Lower lobe of right lung (tissue), 2 donors: ENCODE measurements at regions of chr2 and their contacts with region 1.

Region 1: GRCh38 chr2:209208211-209208610 is 215.6 kb upstream of the MAP2 start:
- DNase-seq: peak; percentile 43
- ATAC-seq: peak in 1 of 2 donors; percentile 44
- H3K4me3 ChIP-seq: no peak overlapping the region
- H3K27ac ChIP-seq: no peak overlapping the region
- H3K4me1 ChIP-seq: no peaks in the 10 kb centered on the region
- H3K27me3 ChIP-seq: no peaks in the 10 kb centered on the region
- CTCF ChIP-seq: peak; percentile 56

Region 2: DNA sequence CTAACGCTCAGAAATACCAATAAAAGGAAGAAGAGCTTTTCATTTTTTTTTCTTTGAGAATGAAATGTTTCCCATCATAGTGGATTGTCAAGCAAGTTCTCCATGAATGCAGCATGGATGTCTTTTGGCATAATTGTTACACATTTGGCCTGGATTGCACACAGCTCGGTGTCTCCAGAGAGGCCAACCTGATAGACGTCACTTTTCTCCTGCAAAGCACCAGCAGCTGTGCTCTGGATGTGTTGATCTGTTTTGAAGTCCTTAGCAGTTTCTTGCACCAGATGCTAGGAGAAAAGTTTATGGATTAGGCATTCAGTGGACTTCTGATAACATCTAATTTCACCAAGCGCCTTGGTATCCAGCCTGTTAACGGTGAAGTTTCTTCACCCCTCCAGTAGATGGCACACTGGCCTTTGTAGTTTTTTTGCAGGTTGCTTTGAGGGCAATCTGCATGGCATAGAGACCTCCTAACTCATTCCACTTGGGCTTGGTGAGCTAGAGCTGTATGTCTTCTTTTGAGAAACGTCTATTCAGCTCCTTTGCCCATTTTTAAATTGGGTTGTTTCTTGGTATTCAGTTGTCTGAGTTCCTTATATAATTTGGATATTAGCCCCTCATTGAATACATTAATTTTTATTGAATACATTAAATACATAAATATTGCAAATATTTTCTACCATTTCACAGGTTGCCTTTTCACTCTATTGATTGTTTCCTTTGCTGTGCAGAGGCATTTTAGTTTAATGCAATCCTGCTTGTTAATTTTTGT is 741.9 kb before region 1 on chr2:
- intact Hi-C with region 1: loop called (anchors 5 kb)
- DNase-seq: no peak
- ATAC-seq: peak; percentile 52 to 61
- H3K4me3 ChIP-seq: no peak overlapping the region
- H3K27ac ChIP-seq: no peak overlapping the region
- H3K4me1 ChIP-seq: no peaks in the 10 kb centered on the region
- H3K27me3 ChIP-seq: no peaks in the 10 kb centered on the region
- CTCF ChIP-seq: peak; percentile 57

Region 3: DNA sequence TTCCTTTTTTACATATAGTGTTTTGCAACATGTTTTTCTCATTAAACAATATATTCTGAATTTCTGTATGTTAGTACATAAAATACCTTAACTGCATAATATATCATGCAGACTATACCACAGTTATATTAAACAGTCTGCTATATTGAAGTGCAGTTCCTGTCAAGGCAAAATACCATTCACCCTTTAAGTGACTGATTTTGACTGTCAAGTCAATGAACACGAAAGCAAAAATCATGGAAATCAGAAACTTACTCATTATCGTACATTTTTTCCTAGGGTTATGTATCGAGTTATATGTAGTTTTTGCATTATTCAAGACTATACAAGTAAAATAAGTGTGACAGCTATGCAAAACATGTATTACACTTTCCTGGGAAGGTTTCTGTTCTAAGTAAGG is 146.0 kb before region 1 on chr2:
- intact Hi-C with region 1: no loop called
- DNase-seq: no peak
- ATAC-seq: no peak
- H3K4me3 ChIP-seq: no peak overlapping the region
- H3K27ac ChIP-seq: no peak overlapping the region
- H3K4me1 ChIP-seq: no peaks in the 10 kb centered on the region
- H3K27me3 ChIP-seq: no peaks in the 10 kb centered on the region
- CTCF ChIP-seq: no peak